Natural killer cell (primary cell): ENCODE measurements at regions of chr4 and their contacts with region 1.

Region 1: DNA sequence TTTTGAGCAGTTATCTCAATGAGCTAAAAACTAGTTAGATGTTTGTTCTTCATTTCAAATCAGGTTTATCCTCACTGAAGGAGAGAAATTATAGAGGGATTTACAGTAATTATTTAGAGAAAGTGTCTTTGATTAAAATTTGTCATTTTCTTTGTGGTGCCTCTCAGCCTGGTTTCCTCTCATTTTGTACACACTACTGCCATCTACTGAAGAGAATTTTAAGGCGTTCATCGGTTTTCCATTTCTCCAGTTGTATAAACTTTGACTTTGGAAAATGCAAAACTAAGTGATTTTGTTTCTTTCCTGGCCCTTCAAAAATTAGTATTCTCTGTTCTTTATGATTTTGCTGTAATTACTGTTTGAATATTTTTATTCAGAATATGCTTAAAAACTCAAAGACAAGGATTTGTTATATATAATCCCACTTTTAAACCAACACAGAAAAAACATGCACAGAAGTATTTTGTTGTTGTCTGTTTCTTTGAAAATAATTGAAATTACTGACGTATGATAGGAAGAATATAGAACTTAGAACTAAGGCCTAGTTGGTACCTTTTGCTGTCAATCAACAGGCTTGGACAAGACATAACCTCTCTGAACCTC is 34.4 kb upstream of the ANXA3 start:
- DNase-seq: peak in 1 of 2 donors; percentile 8
- ATAC-seq: no peak
- H3K4me3 ChIP-seq: no peak overlapping the region
- H3K4me3 Mint-ChIP-seq: no peak overlapping the region
- H3K27ac ChIP-seq: no peak overlapping the region
- H3K27ac Mint-ChIP-seq: no peak overlapping the region
- H3K4me1 ChIP-seq: no peaks in the 10 kb centered on the region
- H3K4me1 Mint-ChIP-seq: no peaks in the 10 kb centered on the region
- H3K27me3 ChIP-seq: no peaks in the 10 kb centered on the region
- H3K27me3 Mint-ChIP-seq: peaks cover 3 to 16% of the 10 kb centered on the region in 2 donors
- CTCF ChIP-seq: peak; percentile 21

Region 2: GRCh38 chr4:77959566-77960338 is 557.4 kb before region 1 on chr4:
- intact Hi-C with region 1: loop called (anchors 2 kb)
- DNase-seq: peak in 1 of 2 donors; percentile 63
- ATAC-seq: peak in 1 of 3 donors; percentile 35
- H3K4me3 ChIP-seq: no peak overlapping the region
- H3K4me3 Mint-ChIP-seq: no peak overlapping the region
- H3K27ac ChIP-seq: no peak overlapping the region
- H3K27ac Mint-ChIP-seq: no peak overlapping the region
- H3K4me1 ChIP-seq: no peaks in the 10 kb centered on the region
- H3K4me1 Mint-ChIP-seq: no peaks in the 10 kb centered on the region
- H3K27me3 ChIP-seq: no peaks in the 10 kb centered on the region
- H3K27me3 Mint-ChIP-seq: no peaks in the 10 kb centered on the region
- CTCF ChIP-seq: peak; percentile 74

Region 3: DNA sequence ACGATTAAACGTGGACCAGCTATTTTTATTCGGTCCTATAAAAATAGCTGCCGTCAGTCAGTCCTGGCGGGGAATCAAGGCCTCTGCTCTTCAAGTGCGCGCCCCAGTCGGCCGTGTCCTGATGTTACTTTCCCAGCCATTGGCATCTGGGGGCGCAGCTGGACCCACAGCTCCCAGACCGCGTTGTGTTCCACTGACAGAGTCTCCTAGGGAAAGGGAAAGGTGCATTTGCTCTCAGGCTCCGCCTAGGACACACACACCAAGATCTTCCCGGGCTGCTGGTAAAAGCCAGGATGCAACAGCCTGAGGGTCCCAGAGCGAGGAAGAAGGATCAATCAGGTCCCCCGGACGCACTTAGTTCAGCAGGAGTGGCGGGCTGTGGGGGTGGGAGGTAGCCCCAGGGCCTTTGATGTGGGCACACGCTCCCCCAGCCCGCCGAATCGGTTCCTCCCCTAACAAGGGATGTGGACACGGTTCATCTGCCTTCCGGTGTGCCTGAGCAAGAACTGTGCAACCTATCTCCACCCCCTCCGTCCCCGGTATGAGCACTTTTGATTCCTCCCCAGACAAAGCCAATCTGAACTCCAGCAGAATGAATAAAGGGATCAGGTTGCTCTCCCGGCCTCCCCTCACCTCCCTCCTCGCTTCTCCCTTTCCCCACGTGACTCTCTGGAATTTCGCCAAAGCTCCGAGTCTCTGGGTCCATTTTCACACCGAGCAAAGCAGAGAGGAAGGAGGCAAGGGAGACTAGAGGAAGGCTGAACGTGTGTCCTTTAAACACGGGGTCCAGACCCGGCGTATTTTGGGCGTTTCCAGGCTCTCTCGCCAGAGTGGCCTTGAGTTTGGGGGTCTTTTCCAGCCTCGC is 460.7 kb before region 1 on chr4:
- intact Hi-C with region 1: loop called (anchors 5 kb)
- DNase-seq: peak; percentile 15 to 34
- ATAC-seq: peak in 2 of 3 donors; percentile 36 to 68
- H3K4me3 ChIP-seq: peak overlapping the region; percentile 32
- H3K4me3 Mint-ChIP-seq: peak overlapping the region; percentile 77
- H3K27ac ChIP-seq: no peak overlapping the region
- H3K27ac Mint-ChIP-seq: no peak overlapping the region
- H3K4me1 ChIP-seq: peaks cover 34% of the 10 kb centered on the region
- H3K4me1 Mint-ChIP-seq: peaks cover 30 to 34% of the 10 kb centered on the region in 2 donors
- H3K27me3 ChIP-seq: peaks cover 35% of the 10 kb centered on the region
- H3K27me3 Mint-ChIP-seq: peaks cover 44 to 48% of the 10 kb centered on the region in 2 donors
- CTCF ChIP-seq: no peak